Cardiac septum (tissue), 1 donor: ENCODE measurements at regions of chr5 and their contacts with region 1.

Region 1: DNA sequence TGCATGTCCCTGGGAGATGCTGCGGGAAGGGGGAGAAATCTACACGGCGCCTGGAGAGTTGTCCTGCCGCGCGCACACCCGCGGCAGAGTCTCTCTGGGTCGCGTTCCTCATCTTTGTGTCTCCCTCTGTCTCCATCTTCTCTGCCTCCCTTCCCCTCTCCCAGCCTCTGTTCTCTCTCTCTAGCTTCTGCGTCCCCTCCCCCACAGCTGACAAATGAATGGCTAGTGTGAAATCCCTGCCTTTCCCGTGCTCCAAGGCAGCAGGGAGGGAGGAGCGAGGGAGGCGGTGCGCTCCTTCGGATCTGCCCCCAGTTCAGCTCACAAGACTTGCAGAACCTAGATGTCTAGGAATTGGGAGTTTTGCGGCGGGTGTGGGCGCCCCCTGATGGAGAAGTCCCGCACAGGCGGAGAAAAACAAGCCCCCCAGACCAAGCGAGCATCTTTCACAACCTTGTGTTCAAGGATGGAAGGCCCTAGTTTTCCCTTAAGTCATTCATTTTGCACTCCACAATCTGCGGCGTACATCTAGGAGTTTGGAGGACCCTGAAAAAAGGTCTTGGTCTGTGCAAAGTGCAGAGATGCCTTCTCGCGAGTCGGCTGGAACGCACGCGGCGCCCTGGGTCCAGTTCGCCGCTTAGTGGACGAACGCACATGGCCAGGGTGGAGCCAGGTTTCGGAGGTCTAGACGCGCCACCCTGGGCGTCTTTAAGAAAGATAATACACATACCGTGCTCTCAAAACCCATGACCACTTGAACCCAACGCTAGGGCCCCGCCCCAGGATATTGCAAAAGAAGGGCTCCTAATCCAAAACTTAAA is 2.0 kb downstream of the VCAN start:
- DNase-seq: peak; percentile 89

Region 2: GRCh38 chr5:82356808-82357671 is 1116.5 kb before region 1 on chr5:
- intact Hi-C with region 1: loop called (anchors 5 kb)
- DNase-seq: peak; percentile 90

Region 3: GRCh38 chr5:82641331-82642003 is 832.1 kb before region 1 on chr5:
- intact Hi-C with region 1: loop called (anchors 1 kb)
- DNase-seq: no peak

Region 4: DNA sequence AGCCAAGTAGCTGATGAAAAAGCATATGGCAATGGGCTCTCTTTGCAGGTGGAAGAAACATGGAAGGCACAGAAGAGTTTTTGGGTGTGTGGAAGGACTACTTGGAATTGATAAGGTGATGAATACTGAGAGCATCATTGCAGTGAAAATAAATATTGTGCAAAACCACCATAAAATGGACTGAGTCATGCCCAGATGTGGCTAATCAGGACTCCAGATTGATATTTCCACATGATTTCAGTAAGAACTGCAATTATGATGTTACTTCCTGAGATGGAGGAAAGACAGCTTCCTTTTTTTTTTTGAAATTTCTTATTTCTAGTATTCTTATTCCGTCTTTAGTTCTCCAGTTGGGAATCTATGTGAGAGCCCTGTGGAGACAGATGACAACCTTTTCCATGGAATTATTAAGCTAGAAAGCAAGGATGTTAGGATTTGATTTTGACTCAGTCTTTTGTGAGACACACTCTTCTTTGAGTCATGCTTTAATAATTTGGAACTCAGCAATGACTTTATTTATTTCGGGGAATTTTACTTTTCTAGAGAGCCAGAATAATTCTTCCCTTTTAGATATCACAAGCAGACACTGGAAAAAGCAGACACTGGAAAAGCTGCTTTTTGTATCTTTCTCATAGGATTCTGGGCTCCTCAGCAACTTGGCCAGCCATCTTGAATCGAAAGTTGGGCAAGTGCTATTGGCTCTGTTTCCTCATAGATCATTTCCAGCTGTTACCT is 96.3 kb before region 1 on chr5:
- intact Hi-C with region 1: loop called (anchors 5 kb)
- DNase-seq: no peak

Region 5: DNA sequence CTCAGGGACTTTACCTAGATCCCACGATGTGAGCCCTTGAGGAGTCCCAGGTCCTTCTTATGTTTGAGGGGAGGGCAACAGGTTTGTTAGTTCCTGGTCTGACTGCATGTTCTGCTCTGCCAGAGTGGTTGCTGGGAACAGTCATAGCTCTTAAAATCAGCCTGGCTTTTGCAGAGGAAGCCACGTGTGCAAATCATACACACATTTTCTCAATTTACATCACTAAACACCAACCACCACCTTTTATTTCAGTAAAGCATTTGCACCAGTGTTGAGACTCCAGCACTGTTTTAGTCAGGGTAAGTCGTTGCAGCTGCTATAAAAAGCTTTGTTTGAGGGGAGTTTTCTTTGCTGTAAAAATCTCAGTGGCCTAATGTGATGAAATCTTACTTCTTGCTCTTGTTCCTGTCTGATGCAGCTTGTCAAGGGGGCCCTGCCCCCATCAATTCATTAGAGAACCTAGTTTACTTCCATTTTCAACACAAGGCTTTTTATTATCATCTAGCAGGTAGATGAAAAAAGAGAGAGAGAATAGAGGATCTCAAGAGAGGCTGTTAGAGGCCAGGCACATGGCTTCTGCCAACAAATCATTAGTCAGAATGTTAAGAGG is 72.3 kb before region 1 on chr5:
- intact Hi-C with region 1: no loop called
- DNase-seq: no peak

Region 6: DNA sequence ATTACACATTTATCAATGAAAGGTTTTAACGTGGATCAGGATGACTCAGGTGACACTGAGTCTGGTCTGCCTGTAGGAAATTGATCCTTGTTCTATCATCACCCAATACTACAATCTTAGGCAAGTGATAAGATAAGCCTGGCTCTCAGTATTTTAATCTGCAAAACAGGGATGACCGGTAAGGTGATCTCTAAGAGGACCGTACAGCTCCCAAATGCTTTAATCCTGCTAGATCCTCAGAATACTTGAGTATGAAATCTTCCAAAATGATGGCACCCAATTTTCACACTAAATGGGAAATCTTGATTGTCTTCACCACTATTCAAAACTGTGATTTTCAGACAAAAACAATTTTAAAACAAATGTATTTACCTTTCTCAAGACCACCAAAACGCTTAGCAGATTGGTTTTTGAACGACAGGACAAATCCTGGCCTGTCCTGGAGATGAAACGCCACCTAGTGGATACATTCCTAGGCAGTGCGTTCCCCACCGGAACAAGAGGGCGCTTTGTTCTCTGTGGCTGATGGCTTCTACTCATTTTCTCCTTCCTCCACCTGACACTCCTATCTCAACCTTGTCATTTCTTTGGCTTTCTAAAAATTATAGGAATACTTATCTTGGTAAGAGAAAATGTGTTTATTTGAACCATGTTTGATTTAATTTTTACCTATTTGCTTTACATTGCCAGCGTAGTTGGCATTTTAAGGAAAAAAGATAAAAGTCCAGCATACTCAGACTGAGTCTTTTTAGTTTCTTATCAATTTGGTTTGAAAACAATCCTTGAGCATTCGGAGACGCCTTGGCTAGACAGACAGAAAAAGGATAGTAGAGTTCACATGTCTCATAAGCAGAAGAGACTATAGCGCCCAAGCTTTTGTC is 43.2 kb before region 1 on chr5:
- intact Hi-C with region 1: loop called (anchors 5 kb)
- DNase-seq: no peak

Region 7: DNA sequence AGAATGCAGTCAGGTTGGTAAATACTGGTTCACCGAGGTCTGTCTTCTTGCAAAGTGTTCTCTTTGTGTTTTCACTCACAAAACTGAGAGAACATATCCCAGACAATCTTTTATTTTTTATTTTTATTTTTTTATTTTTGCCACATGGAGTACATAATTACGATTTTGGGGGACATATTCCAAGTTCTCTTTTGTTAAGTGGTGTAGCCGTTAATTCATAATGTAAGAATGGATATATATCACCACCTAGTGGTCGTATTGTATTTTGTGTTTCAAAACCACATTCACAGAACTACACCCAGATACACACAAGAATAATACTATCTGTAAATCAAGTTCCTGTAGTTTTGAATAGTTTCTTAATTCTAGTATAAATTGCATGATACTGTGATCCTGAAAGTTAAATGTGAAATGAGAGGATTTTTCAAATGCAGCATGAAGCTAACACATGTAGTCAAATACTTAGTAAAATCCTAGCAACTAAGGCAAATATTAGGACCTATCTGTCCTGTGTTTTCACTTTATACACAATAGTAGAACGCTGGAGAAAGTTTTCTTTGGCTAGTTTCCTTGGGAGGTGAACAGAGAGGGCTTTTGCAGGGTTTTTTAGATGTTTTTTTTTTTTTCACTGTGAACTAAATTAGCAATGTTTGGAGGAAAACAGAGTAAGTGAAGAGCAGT is 90.7 kb after region 1 on chr5:
- intact Hi-C with region 1: loop called (anchors 5 kb)
- DNase-seq: no peak